ENCODE measurements at regions of chr2 and their contacts with region 1.

Region 1: DNA sequence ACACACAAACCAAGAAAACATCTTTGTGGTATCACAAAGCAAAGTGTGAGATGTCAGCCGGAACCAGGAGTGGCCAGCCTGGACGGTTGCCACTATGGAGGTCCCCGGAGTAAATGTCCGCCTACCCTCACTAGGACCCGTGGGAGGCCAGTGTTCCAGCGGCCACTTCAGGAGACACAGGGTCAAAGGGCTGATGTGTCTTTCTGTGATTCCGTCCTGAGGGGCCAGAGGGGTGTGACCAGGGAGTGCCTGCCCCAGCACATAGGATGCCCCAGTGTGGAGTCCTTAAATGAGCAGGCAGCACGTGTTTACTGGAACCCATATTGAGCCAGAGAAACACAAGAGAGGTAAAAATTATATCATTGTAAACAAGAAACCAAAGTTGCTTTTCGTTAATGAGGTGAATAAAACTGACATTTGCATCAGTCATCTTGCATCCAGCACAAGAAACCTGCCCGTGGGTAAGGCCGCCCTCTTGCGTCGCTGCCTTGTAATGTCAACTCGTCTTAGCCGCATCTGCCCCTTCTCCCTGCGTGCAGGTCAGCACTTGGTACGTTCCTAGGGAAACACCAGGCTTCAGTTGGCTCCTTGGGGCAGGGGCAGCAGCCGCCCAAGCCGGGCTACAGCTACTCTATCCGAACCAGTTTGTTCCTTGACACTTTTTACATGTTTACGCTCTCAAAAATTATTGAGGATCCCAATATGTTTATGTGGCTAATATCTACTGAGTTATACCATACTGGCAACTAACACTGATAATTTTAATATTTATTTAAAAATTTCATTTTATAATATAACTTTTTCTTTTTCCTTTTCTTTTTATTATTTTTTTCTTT is 46.7 kb upstream of the LAPTM4A start:
- DNase-seq: peak; percentile 94
- H3K4me3 ChIP-seq: no peak overlapping the region
- H3K27ac ChIP-seq: no peak overlapping the region
- H3K4me1 ChIP-seq: peaks cover 4% of the 10 kb centered on the region
- H3K27me3 ChIP-seq: no peaks in the 10 kb centered on the region
- CTCF ChIP-seq: peak; percentile 86 to 93
- POLR2A ChIP-seq: no peak

Region 2: GRCh38 chr2:19266838-19267237 is 831.3 kb before region 1 on chr2:
- CTCF ChIA-PET with region 1: no interaction called
- POLR2A ChIA-PET with region 1: no interaction called
- dilution Hi-C with region 1: no loop called
- intact Hi-C with region 1: no loop called
- DNase-seq: no peak
- H3K4me3 ChIP-seq: no peak overlapping the region
- H3K27ac ChIP-seq: no peak overlapping the region
- H3K4me1 ChIP-seq: no peaks in the 10 kb centered on the region
- H3K27me3 ChIP-seq: no peaks in the 10 kb centered on the region
- CTCF ChIP-seq: no peak
- POLR2A ChIP-seq: no peak

Region 3: DNA sequence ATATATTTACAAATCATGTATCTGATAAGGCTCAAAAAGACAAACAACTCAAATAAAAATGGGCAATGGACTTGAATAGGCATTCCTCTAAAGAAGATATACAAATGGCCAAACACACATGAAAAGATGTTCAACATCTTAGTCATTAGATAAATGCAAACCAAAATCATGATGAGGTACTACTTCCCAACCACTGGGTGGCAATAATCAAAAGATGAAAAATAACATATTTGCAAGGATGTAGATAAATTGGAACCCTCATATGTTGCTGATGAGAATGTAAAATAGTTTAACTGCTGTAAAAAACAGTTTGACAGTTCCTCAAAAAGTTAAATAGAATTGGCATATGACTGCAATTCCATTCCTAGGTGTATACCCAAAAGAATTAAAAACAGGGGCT is 328.6 kb before region 1 on chr2:
- CTCF ChIA-PET with region 1: no interaction called
- POLR2A ChIA-PET with region 1: no interaction called
- dilution Hi-C with region 1: no loop called
- intact Hi-C with region 1: loop called (anchors 10 kb)
- DNase-seq: peak; percentile 14
- H3K4me3 ChIP-seq: no peak overlapping the region
- H3K27ac ChIP-seq: no peak overlapping the region
- H3K4me1 ChIP-seq: no peaks in the 10 kb centered on the region
- H3K27me3 ChIP-seq: peaks cover 0 to 6% of the 10 kb centered on the region in 2 experiments
- CTCF ChIP-seq: peak in 1 of 2 donors; percentile 1
- POLR2A ChIP-seq: no peak

Measured in endothelial cell of umbilical vein (primary cell).